ENCODE measurements at regions of chr18 and their contacts with region 1.

Region 1: GRCh38 chr18:5969989-5970403 is 74.7 kb upstream of the TMEM200C start:
- DNase-seq: peak in 22 of 42 donors; percentile 6 to 73 (median 44)

Region 2: GRCh38 chr18:5890331-5891183 is 79.4 kb before region 1 on chr18:
- intact Hi-C with region 1: loop called (anchors 10 kb)
- DNase-seq: peak in 21 of 42 donors; percentile 2 to 64 (median 32)

Measured in head of caudate nucleus (tissue), 42 donors.